PC-3 (cell line): ENCODE measurements at regions of chr5 and their contacts with region 1.

Region 1: DNA sequence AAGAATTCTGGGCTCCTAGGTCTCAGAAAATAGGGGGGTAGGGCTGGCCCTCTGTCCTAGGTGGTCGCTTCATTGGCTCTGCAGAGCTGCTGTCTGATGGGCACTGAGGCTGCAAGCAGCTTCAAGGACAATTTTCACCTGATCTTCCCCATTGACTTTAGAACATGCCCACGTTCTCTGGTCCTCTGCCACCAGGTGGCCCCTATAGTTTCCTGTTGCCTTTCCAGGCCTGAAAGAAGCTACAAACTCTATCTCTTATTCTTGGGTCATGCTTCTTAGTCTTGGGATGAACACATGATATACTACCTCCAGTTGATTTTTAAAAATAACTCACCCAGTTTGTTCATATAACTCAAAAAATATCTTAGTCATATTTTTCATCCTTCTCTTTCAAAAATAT is 26.3 kb downstream of the SPZ1 start:
- DNase-seq: peak; percentile 45
- ATAC-seq: peak; percentile 70
- H3K4me3 ChIP-seq: no peak overlapping the region
- H3K27ac ChIP-seq: no peak overlapping the region
- H3K4me1 ChIP-seq: no peaks in the 10 kb centered on the region
- H3K27me3 ChIP-seq: no peaks in the 10 kb centered on the region
- CTCF ChIP-seq: peak; percentile 56

Region 2: GRCh38 chr5:80407735-80408482 is 61.9 kb after region 1 on chr5 and contains the start of gene ZFYVE16:
- CTCF ChIA-PET with region 1: interaction called, 3 read pairs
- POLR2A ChIA-PET with region 1: no interaction called
- intact Hi-C with region 1: loop called (anchors 5 kb)
- DNase-seq: peak; percentile 95
- ATAC-seq: peak; percentile 84
- H3K4me3 ChIP-seq: peak within 1 kb of the TSS; percentile 82
- H3K27ac ChIP-seq: peak within 1 kb of the TSS; percentile 87
- H3K4me1 ChIP-seq: peaks cover 7% of the 10 kb centered on the region; the same call in 1 of the 2 replicates
- H3K27me3 ChIP-seq: no peaks in the 10 kb centered on the region
- CTCF ChIP-seq: 0 out of 2 replicates have a peak, but pooled peaks have one; percentile 19
- total RNA-seq, gene ZFYVE16: 7.3 and 9.7 TPM in 2 replicates

Region 3: GRCh38 chr5:80672140-80672736 is 326.2 kb after region 1 on chr5:
- CTCF ChIA-PET with region 1: interaction called, 4 read pairs
- POLR2A ChIA-PET with region 1: no interaction called
- intact Hi-C with region 1: loop called (anchors 10 kb)
- DNase-seq: peak; percentile 79
- ATAC-seq: peak; percentile 79
- H3K4me3 ChIP-seq: no peak overlapping the region
- H3K27ac ChIP-seq: no peak overlapping the region
- H3K4me1 ChIP-seq: no peaks in the 10 kb centered on the region
- H3K27me3 ChIP-seq: no peaks in the 10 kb centered on the region
- CTCF ChIP-seq: peak; percentile 63